ENCODE measurements at regions of chr1 and their contacts with region 1.

Region 1: GRCh38 chr1:168386949-168387586 is 106.4 kb downstream of the TBX19 start:
- DNase-seq: peak in 1 of 2 experiments; percentile 78
- H3K4me3 ChIP-seq: peak overlapping the region in 3 of 4 experiments; percentile 12 to 50 (median 13); a peak in 5 of 8 replicates
- H3K27ac ChIP-seq: no peak overlapping the region
- H3K4me1 ChIP-seq: peaks cover 0 to 15% (median 12%) of the 10 kb centered on the region in 4 experiments; a peak in 5 of 7 replicates
- H3K27me3 ChIP-seq: peaks cover 0 to 4% (median 2%) of the 10 kb centered on the region in 4 experiments; a peak in 3 of 7 replicates
- CTCF ChIP-seq: no peak
- EP300 ChIP-seq: no peak
- POLR2A ChIP-seq: no peak
- RAD21 ChIP-seq: no peak

Region 2: GRCh38 chr1:168328731-168329399 is 58.2 kb before region 1 on chr1:
- CTCF ChIA-PET with region 1: no interaction called
- POLR2A ChIA-PET with region 1: no interaction called
- DNase-seq: no peak
- H3K4me3 ChIP-seq: no peak overlapping the region
- H3K27ac ChIP-seq: no peak overlapping the region
- H3K4me1 ChIP-seq: no peaks in the 10 kb centered on the region; a peak in 3 of 7 replicates
- H3K27me3 ChIP-seq: no peaks in the 10 kb centered on the region
- CTCF ChIP-seq: no peak
- EP300 ChIP-seq: no peak
- POLR2A ChIP-seq: no peak
- RAD21 ChIP-seq: no peak

Region 3: DNA sequence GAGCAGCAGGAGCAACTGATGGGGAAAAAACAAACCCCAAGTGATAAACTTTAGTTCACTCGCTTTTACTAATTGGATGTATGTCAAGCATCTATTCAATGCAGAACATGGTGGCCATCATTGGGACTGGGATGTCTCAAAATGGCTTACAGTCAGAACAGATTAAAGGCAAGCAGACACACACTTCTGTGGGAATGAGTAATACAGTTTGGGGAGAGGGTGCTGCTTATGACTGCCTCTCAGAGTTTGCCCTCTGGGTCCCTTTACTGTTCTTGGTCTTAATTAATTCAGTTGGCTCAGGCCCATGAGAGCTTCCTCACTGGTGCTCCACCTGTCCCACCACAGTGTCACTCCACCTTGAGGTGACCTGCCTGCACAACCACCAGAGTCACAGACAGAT is 13.1 kb after region 1 on chr1:
- CTCF ChIA-PET with region 1: interaction called, 4 read pairs
- POLR2A ChIA-PET with region 1: interaction called, 15 read pairs
- DNase-seq: no peak
- H3K4me3 ChIP-seq: no peak overlapping the region
- H3K27ac ChIP-seq: no peak overlapping the region
- H3K4me1 ChIP-seq: peaks cover 0 to 6% (median 2%) of the 10 kb centered on the region in 4 experiments; a peak in 3 of 7 replicates
- H3K27me3 ChIP-seq: peaks cover 0 to 1% (median 0%) of the 10 kb centered on the region in 4 experiments; a peak in 1 of 7 replicates
- CTCF ChIP-seq: no peak
- EP300 ChIP-seq: no peak
- POLR2A ChIP-seq: no peak
- RAD21 ChIP-seq: no peak

Measured in H1 (cell line).